Mammary epithelial cell (primary cell): ENCODE measurements at regions of chr16 and their contacts with region 1.

Region 1: DNA sequence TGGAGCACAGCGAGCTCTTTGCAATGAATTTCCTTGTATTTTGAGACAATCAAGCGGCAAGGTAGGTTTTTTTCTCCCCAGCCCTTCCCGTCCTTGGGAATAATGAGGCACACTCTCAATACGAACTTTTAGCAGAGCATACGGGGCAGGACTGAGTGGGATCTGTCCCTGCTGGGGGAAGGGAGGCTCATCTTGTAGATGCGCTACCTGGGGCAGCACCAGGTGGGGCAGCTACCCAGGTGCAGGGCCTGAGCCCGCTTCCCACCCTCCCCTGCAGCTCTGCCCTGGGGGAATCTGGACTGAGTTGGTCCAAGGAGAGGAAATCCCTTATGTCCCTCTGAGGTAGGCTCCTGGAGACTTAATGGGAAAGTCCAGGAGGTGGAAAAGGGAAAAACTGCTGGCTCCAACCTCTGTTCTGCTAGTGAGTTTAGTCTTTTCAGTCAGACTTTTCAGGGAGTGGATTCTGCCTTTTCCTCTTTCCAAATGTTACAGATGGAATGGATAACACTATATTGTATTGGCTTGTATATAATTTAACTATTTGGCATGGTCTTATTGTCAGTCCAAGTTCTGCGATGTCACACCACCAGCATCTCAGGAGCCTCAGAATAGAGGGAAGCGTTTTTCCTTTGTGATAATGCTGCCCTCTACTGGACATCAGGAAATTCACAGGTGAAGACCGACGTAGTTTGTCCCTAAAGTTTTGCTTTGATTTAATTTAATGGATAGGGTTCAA is 9.6 kb upstream of the CES1 start:
- DNase-seq: peak; percentile 16
- H3K4me3 ChIP-seq: no peak overlapping the region
- H3K27ac ChIP-seq: no peak overlapping the region
- H3K4me1 ChIP-seq: no peaks in the 10 kb centered on the region
- H3K27me3 ChIP-seq: peaks cover 2% of the 10 kb centered on the region
- CTCF ChIP-seq: peak; percentile 51 to 68

Region 2: DNA sequence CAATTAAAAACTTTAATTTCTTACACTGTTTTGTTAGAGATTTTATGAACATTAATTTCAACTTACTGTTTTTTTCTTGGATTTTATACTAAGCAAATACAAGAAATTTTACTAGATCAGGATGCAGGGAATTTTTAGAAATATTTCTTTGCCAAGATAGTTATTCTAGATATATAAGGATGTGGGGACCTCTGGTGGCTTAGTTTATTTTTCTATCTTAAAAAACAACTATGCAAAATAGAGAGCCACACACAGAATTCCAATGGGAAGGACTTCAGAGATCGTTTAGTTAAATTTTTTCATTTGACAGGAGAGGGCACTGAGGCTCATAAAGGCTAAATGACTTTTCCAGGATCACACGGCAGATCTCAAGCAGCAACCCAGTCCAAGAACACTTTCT is 299.1 kb before region 1 on chr16:
- CTCF ChIA-PET with region 1: no interaction called
- dilution Hi-C with region 1: no loop called
- in situ Hi-C with region 1: no loop called
- intact Hi-C with region 1: loop called (anchors 2 kb)
- DNase-seq: no peak
- H3K4me3 ChIP-seq: no peak overlapping the region
- H3K27ac ChIP-seq: no peak overlapping the region
- H3K4me1 ChIP-seq: peaks cover 25% of the 10 kb centered on the region
- H3K27me3 ChIP-seq: no peaks in the 10 kb centered on the region
- CTCF ChIP-seq: peak; percentile 11 to 35

Region 3: DNA sequence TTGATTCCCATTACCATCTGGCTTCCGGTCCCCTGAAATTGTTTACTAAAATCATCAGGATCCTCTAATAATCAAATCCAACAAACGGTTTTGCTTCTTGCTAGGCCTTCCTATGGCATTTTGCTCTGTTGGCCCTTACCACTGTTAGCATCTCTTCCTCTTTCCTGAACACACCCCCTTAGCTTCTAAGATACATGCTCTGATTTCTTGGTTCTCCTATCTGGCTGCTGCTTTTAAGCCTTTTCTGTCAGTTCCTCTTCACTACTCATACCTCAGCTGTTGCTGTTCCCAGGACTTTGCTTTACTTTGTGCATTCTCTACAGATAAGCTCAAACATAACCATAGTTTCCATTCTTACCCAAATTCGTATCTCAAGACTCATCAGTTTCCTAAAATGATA is 264.6 kb before region 1 on chr16:
- CTCF ChIA-PET with region 1: no interaction called
- dilution Hi-C with region 1: loop called (anchors 25 kb)
- in situ Hi-C with region 1: no loop called
- intact Hi-C with region 1: no loop called
- DNase-seq: no peak
- H3K4me3 ChIP-seq: no peak overlapping the region
- H3K27ac ChIP-seq: no peak overlapping the region
- H3K4me1 ChIP-seq: no peaks in the 10 kb centered on the region
- H3K27me3 ChIP-seq: no peaks in the 10 kb centered on the region
- CTCF ChIP-seq: no peak

Region 4: GRCh38 chr16:55622930-55623561 is 219.5 kb before region 1 on chr16:
- CTCF ChIA-PET with region 1: no interaction called
- dilution Hi-C with region 1: no loop called
- in situ Hi-C with region 1: no loop called
- intact Hi-C with region 1: loop called (anchors 10 kb)
- DNase-seq: peak; percentile 20
- H3K4me3 ChIP-seq: no peak overlapping the region
- H3K27ac ChIP-seq: no peak overlapping the region
- H3K4me1 ChIP-seq: no peaks in the 10 kb centered on the region
- H3K27me3 ChIP-seq: no peaks in the 10 kb centered on the region
- CTCF ChIP-seq: peak; percentile 52 to 63

Region 5: DNA sequence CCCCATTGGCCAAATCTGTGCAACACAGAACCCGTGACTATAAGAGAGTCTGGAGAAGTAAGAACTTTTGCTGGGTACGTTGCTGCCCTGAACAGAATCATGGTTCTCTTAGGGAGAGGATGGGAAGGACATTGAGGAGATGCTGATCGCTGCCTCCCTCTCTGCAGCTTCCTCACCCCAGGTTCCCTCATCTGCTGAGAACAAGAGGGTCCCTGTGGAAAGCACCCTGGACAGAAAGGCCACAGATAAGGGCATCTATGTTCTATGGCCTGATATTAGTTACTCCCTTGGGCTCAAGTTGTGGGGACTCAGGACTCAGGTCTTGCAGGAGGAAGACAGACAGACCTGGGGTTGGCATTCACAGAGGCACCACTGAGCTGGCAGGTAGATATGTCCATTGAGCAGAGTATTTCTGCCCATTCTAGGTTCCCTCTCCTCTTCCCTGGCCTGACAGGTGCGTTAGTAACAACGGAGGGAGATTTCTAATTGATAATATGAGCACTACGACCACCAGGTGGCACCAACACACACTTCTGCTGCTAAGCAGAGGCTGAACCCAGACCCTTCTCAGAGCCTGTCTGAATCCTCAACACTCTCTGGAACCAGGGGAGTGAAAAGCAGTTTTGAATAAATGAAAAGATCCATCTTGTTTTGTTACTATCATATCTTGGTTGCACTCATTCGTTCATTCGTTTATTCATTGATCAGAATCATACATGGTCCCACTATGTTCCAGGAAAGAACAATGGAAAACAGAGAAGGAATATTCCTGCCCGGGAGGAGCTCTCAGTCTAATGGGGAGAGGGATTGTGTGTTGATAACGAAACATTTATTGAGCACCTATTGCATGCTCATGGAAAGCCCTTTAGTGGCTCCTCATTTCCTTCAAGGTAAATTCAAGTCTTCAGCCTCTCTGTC is 130.3 kb before region 1 on chr16:
- CTCF ChIA-PET with region 1: no interaction called
- dilution Hi-C with region 1: no loop called
- in situ Hi-C with region 1: loop called (anchors 5 to 10 kb)
- intact Hi-C with region 1: loop called (anchors 1 kb)
- DNase-seq: peak; percentile 29
- H3K4me3 ChIP-seq: no peak overlapping the region
- H3K27ac ChIP-seq: no peak overlapping the region
- H3K4me1 ChIP-seq: no peaks in the 10 kb centered on the region
- H3K27me3 ChIP-seq: peaks cover 3% of the 10 kb centered on the region
- CTCF ChIP-seq: peak; percentile 57 to 68

Region 6: GRCh38 chr16:55735120-55735781 is 107.3 kb before region 1 on chr16:
- CTCF ChIA-PET with region 1: no interaction called
- dilution Hi-C with region 1: loop called (anchors 25 kb)
- in situ Hi-C with region 1: no loop called
- intact Hi-C with region 1: no loop called
- DNase-seq: peak; percentile 62
- H3K4me3 ChIP-seq: no peak overlapping the region
- H3K27ac ChIP-seq: no peak overlapping the region
- H3K4me1 ChIP-seq: peaks cover 5% of the 10 kb centered on the region
- H3K27me3 ChIP-seq: no peaks in the 10 kb centered on the region
- CTCF ChIP-seq: no peak